ENCODE measurements at regions of chr3 and their contacts with region 1.

Region 1: GRCh38 chr3:152574461-152575079 is 260.4 kb upstream of the P2RY1 start:
- DNase-seq: peak; percentile 67
- ATAC-seq: peak; percentile 83

Region 2: GRCh38 chr3:152508705-152509104 is 65.9 kb before region 1 on chr3:
- intact Hi-C with region 1: loop called (anchors 2 kb)
- DNase-seq: no peak
- ATAC-seq: no peak

Region 3: GRCh38 chr3:152719264-152719663 is 144.7 kb after region 1 on chr3:
- intact Hi-C with region 1: no loop called
- DNase-seq: no peak
- ATAC-seq: no peak